OCI-LY7 (cell line): ENCODE measurements at regions of chr6 and their contacts with region 1.

Region 1: DNA sequence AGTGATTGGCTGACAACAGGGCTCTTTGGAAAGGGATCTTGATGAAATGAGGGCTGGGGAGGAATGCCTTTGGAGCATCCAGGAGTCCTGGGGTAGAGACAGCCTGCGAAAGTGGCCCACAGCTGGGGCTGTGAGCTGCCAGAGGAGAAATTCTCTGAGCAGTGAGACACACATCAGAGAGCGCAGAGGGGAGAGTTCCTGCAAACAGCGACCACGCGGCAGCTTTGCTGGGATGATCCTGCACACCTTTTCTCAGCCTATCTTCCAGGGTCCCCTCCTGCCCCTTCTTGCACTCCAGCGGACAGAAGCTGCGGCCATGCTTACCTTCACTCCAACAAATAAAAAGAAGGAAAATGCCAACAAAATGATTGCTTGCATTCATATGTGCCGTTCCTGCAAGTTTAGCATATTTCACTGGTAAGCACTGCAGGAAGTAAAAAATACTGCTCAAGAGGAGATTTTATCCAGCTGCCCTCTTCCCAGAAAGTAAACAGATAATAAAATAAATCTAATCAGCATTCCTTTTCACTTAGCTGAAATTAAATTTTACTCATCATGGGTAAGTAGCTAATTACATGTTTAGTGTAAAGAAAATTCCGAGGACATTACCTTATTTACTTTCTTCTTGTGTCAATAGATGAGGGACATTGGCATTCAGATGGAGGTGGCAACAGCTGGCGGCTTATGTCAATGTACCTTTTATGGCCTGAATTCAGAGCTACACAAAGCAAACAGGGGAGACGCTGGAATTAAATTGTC is 339.9 kb upstream of the ARID1B start:
- DNase-seq: no peak
- H3K4me3 ChIP-seq: no peak overlapping the region
- H3K27ac ChIP-seq: no peak overlapping the region
- H3K4me1 ChIP-seq: no peaks in the 10 kb centered on the region
- CTCF ChIP-seq: no peak

Region 2: DNA sequence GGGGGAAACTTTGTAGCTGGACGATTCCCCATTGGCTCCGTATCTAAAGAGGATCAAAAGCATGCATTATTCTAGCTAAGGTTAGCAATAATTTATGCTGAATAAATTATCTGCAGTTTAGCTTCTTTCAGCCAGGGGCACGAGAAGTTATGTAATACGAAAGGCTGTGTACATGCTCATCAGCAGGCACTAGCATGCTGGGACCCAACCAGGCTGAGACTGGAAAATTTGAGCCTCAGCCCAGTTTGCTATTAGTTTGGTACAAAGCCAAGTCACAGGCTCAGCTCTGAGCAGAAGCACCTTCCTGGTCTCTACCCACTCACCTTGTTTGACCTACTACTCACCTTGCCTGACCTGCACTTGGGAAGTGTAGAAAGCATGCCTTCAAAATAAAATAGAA is 11.8 kb after region 1 on chr6:
- CTCF ChIA-PET with region 1: no interaction called
- POLR2A ChIA-PET with region 1: interaction called, 10 read pairs
- intact Hi-C with region 1: no loop called
- DNase-seq: no peak
- H3K4me3 ChIP-seq: no peak overlapping the region
- H3K27ac ChIP-seq: no peak overlapping the region
- H3K4me1 ChIP-seq: peaks cover 8% of the 10 kb centered on the region
- CTCF ChIP-seq: no peak